Activated naive CD4-positive, alpha-beta T cell treated with anti-CD3 and anti-CD28 coated beads for 36 hours (primary cell): ENCODE measurements at regions of chr1 and their contacts with region 1.

Region 1: GRCh38 chr1:40315239-40315794 is 1.8 kb downstream of the COL9A2 start:
- DNase-seq: peak; percentile 90
- H3K4me3 Mint-ChIP-seq: peak overlapping the region; percentile 76
- H3K27ac Mint-ChIP-seq: no peak overlapping the region
- H3K4me1 Mint-ChIP-seq: peaks cover 28% of the 10 kb centered on the region
- H3K27me3 Mint-ChIP-seq: peaks cover 7% of the 10 kb centered on the region

Region 2: GRCh38 chr1:40096977-40097782 is 218.1 kb before region 1 on chr1 and contains the start of gene PPT1:
- CTCF ChIA-PET with region 1: interaction called, 3 read pairs
- intact Hi-C with region 1: loop called (anchors 5 kb)
- DNase-seq: peak; percentile 82
- H3K4me3 Mint-ChIP-seq: peak within 1 kb of the TSS; percentile 94
- H3K27ac Mint-ChIP-seq: peak within 1 kb of the TSS; percentile 65
- H3K4me1 Mint-ChIP-seq: peaks cover 41% of the 10 kb centered on the region
- H3K27me3 Mint-ChIP-seq: no peaks in the 10 kb centered on the region
- total RNA-seq, gene PPT1: 81.3 to 89.7 TPM

Region 3: DNA sequence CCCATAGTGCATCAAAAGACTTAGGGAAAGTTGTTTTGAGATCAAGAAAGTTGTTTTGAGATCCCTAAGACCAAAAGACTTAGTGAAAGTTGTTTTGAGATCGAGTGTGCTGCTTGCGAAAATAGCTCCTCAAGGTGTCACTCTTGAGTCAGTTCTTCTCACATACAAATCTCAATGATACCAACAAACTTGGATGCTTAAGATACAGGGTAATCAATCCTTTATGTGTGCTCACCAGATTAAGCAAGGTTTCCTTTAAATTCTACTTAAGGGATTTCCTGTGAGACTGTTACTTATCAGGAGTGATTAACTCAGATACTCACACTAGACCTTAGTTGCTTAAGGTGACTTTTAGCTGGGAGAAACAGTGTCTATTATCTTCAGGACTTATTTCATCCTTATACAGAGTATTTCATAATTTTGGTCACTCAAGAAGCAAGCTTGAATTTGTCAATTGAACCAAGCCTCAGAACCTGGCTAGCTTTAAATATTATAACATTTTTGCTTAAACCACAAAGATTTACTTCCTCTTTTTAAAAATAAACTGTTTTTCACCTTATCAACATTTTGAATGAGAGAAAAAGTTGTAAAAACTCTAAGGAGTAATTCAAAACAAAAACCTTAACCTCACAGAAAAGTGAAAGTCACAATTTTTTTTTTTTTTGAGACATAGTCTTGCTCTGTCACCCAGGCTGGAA is 162.1 kb before region 1 on chr1:
- CTCF ChIA-PET with region 1: interaction called, 58 read pairs
- intact Hi-C with region 1: loop called (anchors 1 kb)
- DNase-seq: peak; percentile 51
- H3K4me3 Mint-ChIP-seq: no peak overlapping the region
- H3K27ac Mint-ChIP-seq: peak overlapping the region; percentile 10
- H3K4me1 Mint-ChIP-seq: peaks cover 7% of the 10 kb centered on the region
- H3K27me3 Mint-ChIP-seq: peaks cover 2% of the 10 kb centered on the region

Region 4: DNA sequence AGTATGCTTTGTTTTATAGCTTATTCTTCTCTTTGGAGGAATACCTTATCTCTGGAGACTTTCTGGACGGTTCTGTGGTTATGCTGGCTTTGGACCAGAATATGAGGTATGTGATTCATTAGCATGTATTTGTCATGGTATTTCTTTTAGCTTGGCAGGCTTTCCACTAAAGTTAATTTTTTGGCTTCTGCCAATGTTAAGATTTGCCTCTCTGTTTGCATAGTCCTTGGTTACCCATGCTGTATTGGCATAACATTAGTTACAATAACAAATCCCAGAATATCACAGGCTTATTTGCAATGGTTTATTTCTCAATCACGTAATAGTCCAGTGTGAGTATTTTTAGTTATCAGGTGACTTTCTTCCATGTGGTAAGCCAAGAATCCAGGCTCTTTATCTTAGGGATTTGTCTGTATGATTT is 47.5 kb before region 1 on chr1:
- CTCF ChIA-PET with region 1: interaction called, 3 read pairs
- intact Hi-C with region 1: loop called (anchors 2 kb)
- DNase-seq: no peak
- H3K4me3 Mint-ChIP-seq: no peak overlapping the region
- H3K27ac Mint-ChIP-seq: no peak overlapping the region
- H3K4me1 Mint-ChIP-seq: peaks cover 53% of the 10 kb centered on the region
- H3K27me3 Mint-ChIP-seq: no peaks in the 10 kb centered on the region

Region 5: GRCh38 chr1:40404670-40405462 is 89.5 kb after region 1 on chr1:
- CTCF ChIA-PET with region 1: interaction called, 19 read pairs
- intact Hi-C with region 1: loop called (anchors 1 kb)
- DNase-seq: peak; percentile 62
- H3K4me3 Mint-ChIP-seq: peak overlapping the region; percentile 41
- H3K27ac Mint-ChIP-seq: peak overlapping the region; percentile 94
- H3K4me1 Mint-ChIP-seq: peaks cover 71% of the 10 kb centered on the region
- H3K27me3 Mint-ChIP-seq: no peaks in the 10 kb centered on the region